ENCODE measurements at regions of chr3 and their contacts with region 1.

Region 1: DNA sequence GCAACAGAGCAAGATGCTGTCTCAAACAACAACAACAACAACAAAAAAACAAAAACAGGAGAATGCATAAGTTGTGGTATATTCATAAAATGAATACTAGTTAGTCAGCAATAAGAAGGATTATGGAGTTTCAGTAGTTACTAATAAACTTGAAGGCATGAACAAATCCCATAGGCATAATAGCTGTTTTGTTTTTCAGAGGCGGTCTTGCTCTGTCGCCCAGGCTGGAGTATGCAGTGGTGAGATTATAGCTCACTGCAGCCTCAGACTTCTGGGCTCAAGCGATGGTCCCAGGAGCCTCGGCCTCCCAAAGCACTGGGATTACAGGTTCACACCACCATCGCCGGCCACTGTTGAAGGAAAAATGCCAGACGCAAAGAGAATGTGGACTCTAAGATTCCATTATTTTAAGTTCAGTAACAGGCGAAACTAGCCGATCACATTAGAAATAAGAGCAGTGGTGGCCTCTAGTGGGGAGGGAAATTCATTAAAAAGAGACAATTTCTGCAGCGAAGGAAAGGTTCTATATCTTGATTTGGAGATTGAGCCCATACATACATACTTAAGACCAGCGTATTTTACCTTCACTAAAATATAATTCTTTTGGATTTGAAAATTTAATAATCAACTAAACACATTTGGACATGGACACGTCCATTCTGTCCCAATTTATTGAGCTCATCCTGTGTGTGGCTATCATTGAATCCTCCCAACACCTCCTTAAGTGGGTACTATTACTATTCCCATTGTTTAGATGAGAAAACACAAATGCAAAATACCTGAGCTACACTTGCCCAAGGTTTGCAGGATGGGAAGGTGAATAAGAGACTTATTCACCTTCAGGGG is 27.4 kb upstream of the HDAC11 start:
- DNase-seq: peak in 1 of 2 donors; percentile 79
- ATAC-seq: peak; percentile 25 to 40 (median 28)
- H3K4me3 ChIP-seq: no peak overlapping the region
- H3K4me3 Mint-ChIP-seq: peak overlapping the region; percentile 91
- H3K27ac ChIP-seq: no peak overlapping the region
- H3K27ac Mint-ChIP-seq: peak overlapping the region; percentile 87 to 89
- H3K4me1 ChIP-seq: peaks cover 16% of the 10 kb centered on the region
- H3K4me1 Mint-ChIP-seq: peaks cover 6 to 12% of the 10 kb centered on the region in 2 donors
- H3K27me3 ChIP-seq: no peaks in the 10 kb centered on the region
- H3K27me3 Mint-ChIP-seq: no peaks in the 10 kb centered on the region
- CTCF ChIP-seq: peak; percentile 73

Region 2: GRCh38 chr3:13091898-13092611 is 360.7 kb before region 1 on chr3:
- intact Hi-C with region 1: loop called (anchors 1 kb)
- DNase-seq: peak; percentile 81 to 88
- ATAC-seq: peak; percentile 78 to 98 (median 95)
- H3K4me3 ChIP-seq: no peak overlapping the region
- H3K4me3 Mint-ChIP-seq: no peak overlapping the region
- H3K27ac ChIP-seq: no peak overlapping the region
- H3K27ac Mint-ChIP-seq: no peak overlapping the region
- H3K4me1 ChIP-seq: peaks cover 10% of the 10 kb centered on the region
- H3K4me1 Mint-ChIP-seq: peaks cover 3 to 14% of the 10 kb centered on the region in 2 donors
- H3K27me3 ChIP-seq: no peaks in the 10 kb centered on the region
- H3K27me3 Mint-ChIP-seq: peaks cover 7 to 13% of the 10 kb centered on the region in 2 donors
- CTCF ChIP-seq: peak; percentile 89

Region 3: DNA sequence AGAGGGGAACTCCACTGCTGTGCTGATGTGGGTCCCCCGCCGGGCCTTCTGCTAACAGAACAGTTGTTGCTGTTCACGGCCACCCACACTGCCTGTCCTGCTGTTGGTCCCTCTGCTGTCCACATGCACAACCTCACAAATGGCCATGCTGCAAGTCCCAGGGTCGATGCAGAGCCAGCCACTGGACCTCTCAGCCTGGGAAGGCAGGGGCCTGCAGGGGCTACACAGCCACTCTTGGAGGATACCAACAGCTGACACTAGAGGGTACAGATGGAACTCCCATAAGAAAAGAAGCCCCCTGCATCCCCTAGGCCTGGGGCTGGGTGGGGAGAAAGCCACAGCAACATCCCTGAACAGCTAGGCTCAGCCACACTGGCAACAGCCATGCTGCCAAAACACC is 275.1 kb before region 1 on chr3:
- intact Hi-C with region 1: no loop called
- DNase-seq: no peak
- ATAC-seq: no peak
- H3K4me3 ChIP-seq: no peak overlapping the region
- H3K4me3 Mint-ChIP-seq: no peak overlapping the region
- H3K27ac ChIP-seq: no peak overlapping the region
- H3K27ac Mint-ChIP-seq: no peak overlapping the region
- H3K4me1 ChIP-seq: no peaks in the 10 kb centered on the region
- H3K4me1 Mint-ChIP-seq: no peaks in the 10 kb centered on the region
- H3K27me3 ChIP-seq: no peaks in the 10 kb centered on the region
- H3K27me3 Mint-ChIP-seq: peaks cover 0 to 7% of the 10 kb centered on the region in 2 donors
- CTCF ChIP-seq: no peak

Region 4: DNA sequence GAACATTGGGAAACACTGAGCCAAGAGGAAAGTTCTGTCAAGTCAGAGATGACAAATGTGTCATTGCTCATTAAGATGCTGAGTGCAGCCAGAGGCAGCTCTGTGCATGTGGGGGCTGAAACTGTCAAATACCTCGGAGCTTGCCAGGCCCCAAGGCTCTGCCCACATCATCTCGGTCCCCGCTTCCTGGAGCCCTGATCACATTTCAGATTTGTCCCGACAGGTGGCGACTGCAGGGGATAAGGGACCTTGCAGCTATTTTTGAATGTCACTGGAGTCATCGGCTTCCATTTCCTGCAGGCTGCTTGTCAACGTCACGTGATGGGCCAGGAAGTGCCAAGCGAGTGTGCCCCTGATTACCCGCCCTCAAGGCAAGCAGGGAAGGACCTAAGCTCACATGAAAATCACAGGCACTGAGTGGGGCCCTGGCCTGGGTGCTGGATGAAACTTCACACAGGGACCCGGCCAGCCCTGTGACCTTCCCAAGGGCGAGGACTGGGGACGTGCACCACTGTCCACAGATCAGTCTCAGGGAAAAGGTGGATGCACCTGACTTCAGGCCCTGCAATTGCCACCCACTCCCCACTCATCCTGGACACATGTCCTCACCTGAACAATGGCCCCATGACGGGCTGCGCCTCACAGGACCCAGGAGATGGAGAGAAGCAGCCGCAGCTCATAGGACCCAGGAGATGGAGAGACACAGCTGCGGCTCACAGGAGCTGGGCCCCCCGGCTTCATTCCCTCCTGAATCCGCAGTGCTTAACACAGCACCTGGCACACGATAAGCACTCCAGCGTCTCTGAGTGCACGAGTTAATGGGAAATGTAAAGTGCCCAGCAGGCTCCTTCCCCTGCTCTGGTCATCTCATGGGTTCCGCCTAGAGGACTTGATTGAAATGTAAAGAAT is 106.0 kb before region 1 on chr3:
- intact Hi-C with region 1: loop called (anchors 1 kb)
- DNase-seq: peak; percentile 23 to 90
- ATAC-seq: peak; percentile 56 to 66 (median 61)
- H3K4me3 ChIP-seq: no peak overlapping the region
- H3K4me3 Mint-ChIP-seq: peak overlapping the region; percentile 31
- H3K27ac ChIP-seq: no peak overlapping the region
- H3K27ac Mint-ChIP-seq: peak overlapping the region; percentile 31 to 69
- H3K4me1 ChIP-seq: peaks cover 54% of the 10 kb centered on the region
- H3K4me1 Mint-ChIP-seq: peaks cover 45 to 60% of the 10 kb centered on the region in 2 donors
- H3K27me3 ChIP-seq: no peaks in the 10 kb centered on the region
- H3K27me3 Mint-ChIP-seq: no peaks in the 10 kb centered on the region
- CTCF ChIP-seq: no peak

Region 5: DNA sequence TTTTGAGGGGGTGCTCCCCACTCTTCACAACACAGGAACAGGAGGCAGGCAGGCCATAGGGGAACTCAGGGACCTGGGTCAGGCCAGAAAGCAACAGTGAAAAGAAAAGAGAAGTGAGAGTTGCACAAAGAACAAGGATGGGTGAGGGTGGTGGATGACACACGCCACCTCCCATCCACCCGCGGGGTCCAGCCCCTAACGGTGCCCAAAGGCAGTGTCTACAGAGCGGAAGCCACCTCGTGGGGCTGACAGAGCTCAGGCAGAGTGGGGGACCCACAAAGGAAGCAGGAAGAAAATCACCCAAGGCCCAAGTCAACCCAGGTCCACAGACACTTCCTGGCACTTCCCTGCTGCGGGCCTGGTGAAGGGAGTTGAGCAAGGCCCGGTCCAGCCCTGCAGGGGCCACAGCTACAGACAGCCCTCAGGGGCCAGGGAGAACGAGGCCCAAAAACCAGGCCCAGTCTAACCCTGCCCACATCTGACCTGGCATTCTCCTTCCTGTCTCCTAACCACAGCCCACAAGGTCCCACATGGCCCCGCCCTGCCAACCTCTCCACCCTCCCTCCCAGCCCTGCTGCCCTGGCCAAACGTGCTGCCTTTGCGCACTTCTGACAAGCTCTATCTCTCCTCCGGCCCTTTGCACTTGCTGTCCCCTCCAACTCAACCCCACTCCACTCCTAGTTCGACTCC is 38.5 kb before region 1 on chr3:
- intact Hi-C with region 1: loop called (anchors 1 kb)
- DNase-seq: peak; percentile 72 to 85
- ATAC-seq: peak; percentile 86 to 96 (median 91)
- H3K4me3 ChIP-seq: peak overlapping the region; percentile 4
- H3K4me3 Mint-ChIP-seq: peak overlapping the region; percentile 68
- H3K27ac ChIP-seq: peak overlapping the region; percentile 90
- H3K27ac Mint-ChIP-seq: peak overlapping the region; percentile 94 to 95
- H3K4me1 ChIP-seq: peaks cover 80% of the 10 kb centered on the region
- H3K4me1 Mint-ChIP-seq: peaks cover 51 to 61% of the 10 kb centered on the region in 2 donors
- H3K27me3 ChIP-seq: no peaks in the 10 kb centered on the region
- H3K27me3 Mint-ChIP-seq: no peaks in the 10 kb centered on the region
- CTCF ChIP-seq: no peak

Region 6: DNA sequence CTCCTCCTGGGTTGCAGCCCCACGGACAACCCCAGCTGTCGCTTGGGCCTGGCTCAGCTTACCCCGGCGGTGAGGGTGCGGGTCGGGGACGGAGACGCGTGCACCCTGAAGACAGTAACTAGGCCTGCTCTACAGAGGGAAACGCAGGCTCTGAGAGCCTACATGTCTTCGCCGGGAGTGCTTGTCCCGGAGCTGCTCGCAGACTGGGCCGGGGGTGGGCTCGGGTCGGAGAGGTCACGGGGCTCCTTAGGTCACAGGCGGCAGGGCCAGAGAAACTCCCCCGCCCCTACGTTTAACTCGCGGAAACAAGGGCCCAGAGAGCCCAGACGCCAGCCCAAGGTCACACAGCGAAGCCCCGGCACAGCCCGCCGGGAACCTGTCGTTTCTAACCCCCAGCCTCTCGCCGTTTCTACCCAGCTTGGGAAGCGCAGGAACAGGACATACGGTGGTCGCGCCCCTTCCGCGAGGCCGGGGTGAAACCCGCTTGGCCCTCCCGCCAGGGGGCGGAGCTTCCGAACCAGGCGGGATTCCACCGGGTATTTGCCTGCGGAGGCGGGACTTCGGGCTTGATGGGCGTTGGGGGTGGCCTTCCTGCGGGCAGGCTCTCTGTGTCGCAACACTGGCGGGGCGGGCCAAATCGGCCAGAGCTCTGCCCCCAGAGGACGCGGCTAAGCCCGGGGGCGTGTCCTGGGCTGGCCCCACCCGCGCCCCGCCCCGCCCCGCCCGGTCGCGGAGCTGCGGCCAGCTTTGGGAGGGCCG is 27.0 kb after region 1 on chr3 and contains the start of gene HDAC11:
- intact Hi-C with region 1: loop called (anchors 1 kb)
- DNase-seq: peak; percentile 98
- ATAC-seq: peak; percentile 93 to 99 (median 95)
- H3K4me3 ChIP-seq: peak within 1 kb of the TSS; percentile 95
- H3K4me3 Mint-ChIP-seq: peak within 1 kb of the TSS; percentile 88
- H3K27ac ChIP-seq: peak within 1 kb of the TSS; percentile 89
- H3K27ac Mint-ChIP-seq: peak within 1 kb of the TSS; percentile 79 to 94
- H3K4me1 ChIP-seq: peaks cover 24% of the 10 kb centered on the region
- H3K4me1 Mint-ChIP-seq: peaks cover under 1 to 11% of the 10 kb centered on the region in 2 donors
- H3K27me3 ChIP-seq: no peaks in the 10 kb centered on the region
- H3K27me3 Mint-ChIP-seq: no peaks in the 10 kb centered on the region
- CTCF ChIP-seq: no peak
- total RNA-seq, gene HDAC11: 3.4 to 5.3 (median 3.9) TPM